B cell (primary cell): ENCODE measurements at regions of chr3 and their contacts with region 1.

Region 1: DNA sequence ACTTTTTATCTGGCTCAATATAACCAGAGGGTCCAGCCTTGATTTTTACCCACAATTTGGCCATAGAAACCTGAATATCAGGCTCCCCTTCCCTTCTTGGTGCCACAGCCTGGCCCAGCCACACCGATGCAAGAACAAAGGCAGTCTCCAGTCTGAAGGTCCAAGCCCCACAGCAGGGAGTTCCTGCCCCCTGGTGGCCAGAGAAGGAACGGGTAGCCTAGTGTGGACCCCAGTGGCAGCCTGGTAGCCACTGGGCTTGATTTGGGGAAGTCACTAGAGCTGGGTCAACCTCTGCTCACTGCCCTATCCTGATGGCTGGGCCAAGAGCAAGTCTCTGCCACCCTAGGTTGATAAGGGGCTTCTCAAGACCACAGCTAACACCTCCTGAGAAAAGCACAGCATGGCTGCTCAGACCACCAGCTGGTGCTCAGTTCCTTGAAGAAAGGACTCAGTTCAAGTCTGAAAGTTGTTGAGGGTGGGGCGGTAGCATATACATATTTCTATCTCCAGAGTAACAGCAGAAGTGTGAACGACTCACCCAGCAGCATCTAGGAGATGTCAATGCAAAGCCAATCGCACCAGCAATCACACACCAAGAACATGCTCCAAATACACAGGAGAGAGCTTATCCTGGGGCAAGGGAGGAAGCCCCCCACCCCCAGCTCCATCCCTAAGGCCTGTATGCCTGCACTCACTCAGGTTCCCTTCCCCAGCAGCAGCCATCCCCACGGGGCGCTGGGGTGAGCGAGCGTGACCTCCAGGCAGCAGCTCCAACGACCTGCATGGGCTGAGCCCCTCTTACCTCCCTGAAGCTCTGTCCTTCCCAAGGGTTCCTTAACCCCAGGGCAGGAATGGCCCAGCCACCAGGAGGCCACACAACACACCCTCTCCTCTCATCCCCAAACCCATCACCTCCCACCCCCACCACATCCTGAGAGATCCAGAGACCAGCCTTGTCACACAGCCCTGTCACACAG is 7.6 kb downstream of the PFKFB4 start:
- DNase-seq: peak; percentile 81
- ATAC-seq: peak; percentile 97
- H3K4me3 ChIP-seq: no peak overlapping the region
- H3K4me3 Mint-ChIP-seq: no peak overlapping the region
- H3K27ac ChIP-seq: no peak overlapping the region
- H3K27ac Mint-ChIP-seq: no peak overlapping the region
- H3K4me1 ChIP-seq: peaks cover 0 to 2% of the 10 kb centered on the region in 2 donors
- H3K4me1 Mint-ChIP-seq: no peaks in the 10 kb centered on the region
- H3K27me3 ChIP-seq: no peaks in the 10 kb centered on the region
- H3K27me3 Mint-ChIP-seq: no peaks in the 10 kb centered on the region
- CTCF ChIP-seq: peak; percentile 85

Region 2: GRCh38 chr3:47877290-47877689 is 671.7 kb before region 1 on chr3:
- CTCF ChIA-PET with region 1: no interaction called
- POLR2A ChIA-PET with region 1: no interaction called
- intact Hi-C with region 1: no loop called
- DNase-seq: no peak
- ATAC-seq: no peak
- H3K4me3 ChIP-seq: no peak overlapping the region
- H3K4me3 Mint-ChIP-seq: no peak overlapping the region
- H3K27ac ChIP-seq: no peak overlapping the region
- H3K27ac Mint-ChIP-seq: no peak overlapping the region
- H3K4me1 ChIP-seq: peaks cover 0 to 13% of the 10 kb centered on the region in 2 donors
- H3K4me1 Mint-ChIP-seq: peaks cover 17% of the 10 kb centered on the region
- H3K27me3 ChIP-seq: no peaks in the 10 kb centered on the region
- H3K27me3 Mint-ChIP-seq: no peaks in the 10 kb centered on the region
- CTCF ChIP-seq: no peak

Region 3: GRCh38 chr3:48232734-48233133 is 316.3 kb before region 1 on chr3:
- CTCF ChIA-PET with region 1: interaction called, 5 read pairs
- POLR2A ChIA-PET with region 1: no interaction called
- intact Hi-C with region 1: loop called (anchors 1 kb)
- DNase-seq: peak; percentile 74
- ATAC-seq: peak; percentile 99
- H3K4me3 ChIP-seq: peak overlapping the region in 1 of 5 experiments; percentile 33
- H3K4me3 Mint-ChIP-seq: peak overlapping the region; percentile 56
- H3K27ac ChIP-seq: no peak overlapping the region
- H3K27ac Mint-ChIP-seq: peak overlapping the region; percentile 42
- H3K4me1 ChIP-seq: peaks cover 14 to 27% of the 10 kb centered on the region in 2 donors
- H3K4me1 Mint-ChIP-seq: peaks cover 29% of the 10 kb centered on the region
- H3K27me3 ChIP-seq: no peaks in the 10 kb centered on the region
- H3K27me3 Mint-ChIP-seq: no peaks in the 10 kb centered on the region
- CTCF ChIP-seq: peak; percentile 68

Region 4: DNA sequence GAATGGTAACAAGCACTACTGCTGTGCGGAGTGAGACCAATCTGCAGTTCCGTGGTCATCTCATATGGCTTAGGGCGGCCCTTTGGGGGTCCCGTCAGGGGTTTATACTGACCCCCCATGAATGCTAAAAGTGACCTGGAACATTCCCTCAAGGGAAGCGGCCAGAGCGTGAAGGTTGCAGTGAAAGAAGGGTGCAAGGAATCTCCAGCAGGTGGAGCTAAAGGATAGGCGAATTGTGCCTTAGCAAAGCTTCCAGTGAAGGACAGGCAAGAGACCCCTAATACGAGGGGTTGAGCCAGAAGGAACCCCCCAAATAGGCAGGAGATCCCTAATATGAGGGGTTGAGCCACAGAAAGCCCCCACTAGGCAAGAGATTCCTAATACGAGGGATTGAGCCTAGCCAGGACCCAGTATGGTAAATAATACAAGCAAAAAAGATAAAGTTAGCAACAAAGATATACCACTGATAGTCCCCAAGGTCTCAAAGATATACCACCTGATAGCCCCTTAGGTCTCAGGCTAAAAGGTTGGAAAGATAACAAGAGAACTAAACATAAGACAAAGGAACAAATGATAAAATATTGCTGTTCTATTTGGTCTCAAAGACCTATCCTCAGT is 275.3 kb before region 1 on chr3:
- CTCF ChIA-PET with region 1: interaction called, 20 read pairs
- POLR2A ChIA-PET with region 1: no interaction called
- intact Hi-C with region 1: no loop called
- DNase-seq: peak; percentile 78
- ATAC-seq: peak; percentile 63
- H3K4me3 ChIP-seq: no peak overlapping the region
- H3K4me3 Mint-ChIP-seq: no peak overlapping the region
- H3K27ac ChIP-seq: no peak overlapping the region
- H3K27ac Mint-ChIP-seq: no peak overlapping the region
- H3K4me1 ChIP-seq: no peaks in the 10 kb centered on the region
- H3K4me1 Mint-ChIP-seq: no peaks in the 10 kb centered on the region
- H3K27me3 ChIP-seq: no peaks in the 10 kb centered on the region
- H3K27me3 Mint-ChIP-seq: no peaks in the 10 kb centered on the region
- CTCF ChIP-seq: peak; percentile 79

Region 5: DNA sequence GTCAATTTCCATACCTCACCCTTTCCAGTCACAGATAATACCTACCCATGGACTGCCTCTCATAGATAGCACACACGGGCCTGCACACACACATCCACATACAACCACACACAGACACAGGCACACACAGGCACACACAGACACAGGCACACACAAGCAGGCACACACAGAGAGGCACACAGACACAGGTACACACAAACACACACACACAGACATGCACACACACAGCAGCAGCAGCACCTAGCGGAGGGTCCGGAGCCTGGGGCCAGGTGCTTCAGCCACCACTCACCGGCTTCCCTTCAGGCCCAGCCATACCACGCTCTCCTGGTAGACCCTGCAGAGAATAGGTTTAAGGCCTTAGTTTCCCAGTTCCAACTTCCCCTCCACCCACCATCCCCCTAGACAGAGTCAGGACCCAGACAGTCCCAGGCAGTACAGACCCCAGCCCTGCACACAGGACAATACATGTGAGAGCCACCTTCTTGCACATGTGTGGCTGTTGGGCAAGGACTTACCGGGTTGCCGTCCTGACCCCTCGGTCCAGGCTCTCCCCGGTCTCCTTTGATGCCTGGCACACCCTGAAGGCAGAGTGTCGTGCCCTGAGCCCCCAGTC is 25.1 kb after region 1 on chr3:
- CTCF ChIA-PET with region 1: no interaction called
- POLR2A ChIA-PET with region 1: no interaction called
- intact Hi-C with region 1: no loop called
- DNase-seq: no peak
- ATAC-seq: no peak
- H3K4me3 ChIP-seq: no peak overlapping the region
- H3K4me3 Mint-ChIP-seq: no peak overlapping the region
- H3K27ac ChIP-seq: no peak overlapping the region
- H3K27ac Mint-ChIP-seq: no peak overlapping the region
- H3K4me1 ChIP-seq: no peaks in the 10 kb centered on the region
- H3K4me1 Mint-ChIP-seq: no peaks in the 10 kb centered on the region
- H3K27me3 ChIP-seq: no peaks in the 10 kb centered on the region
- H3K27me3 Mint-ChIP-seq: no peaks in the 10 kb centered on the region
- CTCF ChIP-seq: no peak

Region 6: GRCh38 chr3:48739955-48740823 is 191.2 kb after region 1 on chr3:
- CTCF ChIA-PET with region 1: no interaction called
- POLR2A ChIA-PET with region 1: no interaction called
- intact Hi-C with region 1: no loop called
- DNase-seq: peak; percentile 67
- ATAC-seq: peak; percentile 90
- H3K4me3 ChIP-seq: no peak overlapping the region
- H3K4me3 Mint-ChIP-seq: no peak overlapping the region
- H3K27ac ChIP-seq: no peak overlapping the region
- H3K27ac Mint-ChIP-seq: no peak overlapping the region
- H3K4me1 ChIP-seq: peaks cover 0 to 8% of the 10 kb centered on the region in 2 donors
- H3K4me1 Mint-ChIP-seq: peaks cover 13% of the 10 kb centered on the region
- H3K27me3 ChIP-seq: no peaks in the 10 kb centered on the region
- H3K27me3 Mint-ChIP-seq: no peaks in the 10 kb centered on the region
- CTCF ChIP-seq: peak; percentile 77